GM12878 (cell line): ENCODE measurements at regions of chr6 and their contacts with region 1.

Region 1: DNA sequence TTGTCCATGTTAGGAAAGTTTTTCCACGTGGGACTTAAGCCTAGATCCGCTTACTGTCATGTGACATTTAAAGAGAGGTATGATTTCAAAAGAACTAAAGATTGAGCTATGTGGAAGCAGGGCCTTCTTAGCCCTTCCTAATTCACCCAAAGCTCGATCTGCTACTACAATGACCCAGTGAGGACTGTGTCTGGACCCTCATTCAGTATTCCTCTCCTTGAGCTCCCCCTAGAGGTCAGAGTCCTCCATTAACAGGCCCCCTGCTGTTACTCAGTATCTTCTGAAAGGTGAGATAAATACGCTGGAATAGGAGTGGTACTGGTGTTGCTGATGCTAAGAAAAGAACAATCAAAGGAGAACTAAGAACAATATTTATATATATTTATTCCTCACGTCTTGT is 414.0 kb downstream of the GJA1 start:
- DNase-seq: no peak
- ATAC-seq: peak; percentile 97
- H3K4me3 ChIP-seq: no peak overlapping the region
- H3K27ac ChIP-seq: no peak overlapping the region
- H3K4me1 ChIP-seq: no peaks in the 10 kb centered on the region
- H3K27me3 ChIP-seq: no peaks in the 10 kb centered on the region
- CTCF ChIP-seq: peak; percentile 71 to 74 (median 73)
- EP300 ChIP-seq: no peak
- POLR2A ChIP-seq: no peak
- RAD21 ChIP-seq: peak; percentile 83

Region 2: DNA sequence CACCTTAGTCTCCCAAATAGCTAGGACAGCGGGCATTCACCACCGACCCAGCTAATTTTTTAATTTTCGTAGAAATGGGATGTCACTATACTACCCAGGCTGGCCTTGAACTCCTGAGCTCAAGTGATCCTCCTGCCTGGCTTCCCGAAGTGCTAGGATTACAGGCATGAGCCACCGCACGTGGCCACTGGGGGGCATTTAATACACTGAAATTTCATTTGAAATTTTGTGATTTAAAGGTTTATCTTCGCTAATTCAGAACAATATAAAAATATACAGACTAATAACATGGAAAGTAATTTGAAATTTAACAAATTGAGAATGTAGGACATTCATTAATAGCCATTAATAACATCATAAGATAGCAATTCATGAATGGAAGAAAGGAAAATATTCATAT is 494.7 kb before region 1 on chr6:
- CTCF ChIA-PET with region 1: no interaction called
- POLR2A ChIA-PET with region 1: no interaction called
- RAD21 ChIA-PET with region 1: no interaction called
- SMC1A ChIA-PET with region 1: no interaction called
- in situ Hi-C with region 1: no loop called
- intact Hi-C with region 1: loop called (anchors 10 kb)
- DNase-seq: no peak
- ATAC-seq: no peak
- H3K4me3 ChIP-seq: no peak overlapping the region
- H3K27ac ChIP-seq: no peak overlapping the region
- H3K4me1 ChIP-seq: no peaks in the 10 kb centered on the region
- H3K27me3 ChIP-seq: no peaks in the 10 kb centered on the region; a peak in 2 of 4 replicates
- CTCF ChIP-seq: peak in 2 of 3 experiments; percentile 23 to 33; a peak in 3 of 6 replicates
- EP300 ChIP-seq: no peak
- POLR2A ChIP-seq: no peak
- RAD21 ChIP-seq: no peak

Region 3: GRCh38 chr6:121430514-121431460 is 418.7 kb before region 1 on chr6:
- CTCF ChIA-PET with region 1: interaction called, 10 read pairs
- POLR2A ChIA-PET with region 1: no interaction called
- RAD21 ChIA-PET with region 1: interaction called, 3 read pairs
- SMC1A ChIA-PET with region 1: interaction called, 3 read pairs
- in situ Hi-C with region 1: no loop called
- intact Hi-C with region 1: loop called (anchors 5 kb)
- DNase-seq: no peak
- ATAC-seq: no peak
- H3K4me3 ChIP-seq: no peak overlapping the region
- H3K27ac ChIP-seq: no peak overlapping the region
- H3K4me1 ChIP-seq: no peaks in the 10 kb centered on the region
- H3K27me3 ChIP-seq: no peaks in the 10 kb centered on the region
- CTCF ChIP-seq: peak; percentile 6 to 51 (median 33); a peak in 3 of 6 replicates
- EP300 ChIP-seq: no peak
- POLR2A ChIP-seq: no peak
- RAD21 ChIP-seq: peak; percentile 73

Region 4: GRCh38 chr6:121838842-121839241 is 10.6 kb before region 1 on chr6:
- CTCF ChIA-PET with region 1: interaction called, 13 read pairs
- POLR2A ChIA-PET with region 1: no interaction called
- RAD21 ChIA-PET with region 1: interaction called, 4 read pairs
- SMC1A ChIA-PET with region 1: no interaction called
- in situ Hi-C with region 1: no loop called
- intact Hi-C with region 1: no loop called
- DNase-seq: no peak
- ATAC-seq: no peak
- H3K4me3 ChIP-seq: no peak overlapping the region
- H3K27ac ChIP-seq: no peak overlapping the region
- H3K4me1 ChIP-seq: no peaks in the 10 kb centered on the region
- H3K27me3 ChIP-seq: no peaks in the 10 kb centered on the region
- CTCF ChIP-seq: no peak
- EP300 ChIP-seq: no peak
- POLR2A ChIP-seq: no peak
- RAD21 ChIP-seq: no peak